PC-9 (cell line): ENCODE measurements at regions of chr11 and their contacts with region 1.

Region 1: GRCh38 chr11:70158201-70158600 is 44.9 kb upstream of the FADD start:
- DNase-seq: no peak
- H3K4me3 ChIP-seq: no peak overlapping the region
- H3K27ac ChIP-seq: 0 out of 2 replicates have a peak overlapping the region, but pooled peaks have one; percentile 3
- H3K4me1 ChIP-seq: peaks cover 19% of the 10 kb centered on the region
- H3K27me3 ChIP-seq: no peaks in the 10 kb centered on the region
- CTCF ChIP-seq: peak; percentile 52; the same call in 1 of the 2 replicates

Region 2: GRCh38 chr11:70048279-70049027 is 109.7 kb before region 1 on chr11:
- CTCF ChIA-PET with region 1: no interaction called
- POLR2A ChIA-PET with region 1: no interaction called
- intact Hi-C with region 1: loop called (anchors 1 kb)
- DNase-seq: peak; percentile 84 to 95
- H3K4me3 ChIP-seq: 0 out of 2 replicates have a peak overlapping the region, but pooled peaks have one; percentile 5
- H3K27ac ChIP-seq: peak overlapping the region; percentile 57
- H3K4me1 ChIP-seq: peaks cover 23% of the 10 kb centered on the region
- H3K27me3 ChIP-seq: no peaks in the 10 kb centered on the region
- CTCF ChIP-seq: peak; percentile 76